ENCODE measurements at regions of chr7 and their contacts with region 1.

Region 1: DNA sequence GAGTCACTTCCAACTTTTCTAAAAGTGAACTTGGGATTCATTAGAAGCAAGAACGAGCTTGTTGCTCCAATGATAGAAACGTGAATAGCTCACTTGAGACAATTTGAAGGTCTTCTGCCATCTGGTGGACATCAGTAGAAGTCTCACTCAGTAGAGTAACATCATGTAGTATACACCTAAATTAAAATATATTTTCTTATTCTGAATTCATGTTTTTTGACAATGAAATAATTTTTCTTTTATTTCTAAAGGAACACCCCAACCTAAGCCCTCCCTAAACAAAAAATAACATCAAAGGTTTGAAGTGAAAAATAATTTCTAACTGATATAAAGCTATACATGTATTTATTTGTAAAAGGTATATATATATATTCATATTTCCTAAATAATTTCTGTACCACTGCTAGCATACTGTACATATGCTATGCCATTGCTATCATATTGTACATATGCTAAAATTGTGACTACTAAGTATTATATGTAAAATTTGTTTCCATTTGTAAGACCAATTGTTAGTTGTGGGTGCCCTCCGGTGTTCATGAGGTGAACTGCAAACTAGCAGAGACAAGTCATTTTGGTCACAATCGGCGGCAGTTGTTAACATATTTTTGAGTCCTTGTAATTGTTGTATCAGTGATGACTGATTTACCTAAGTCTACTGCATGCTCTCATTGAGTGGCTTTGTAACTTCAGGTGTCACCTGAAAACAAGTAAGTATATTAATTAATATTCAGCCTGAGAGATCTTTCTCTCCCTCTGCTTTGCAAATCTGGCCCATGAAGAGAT is 121.9 kb downstream of the PTPRZ1 start:
- DNase-seq: peak; percentile 59
- CTCF ChIP-seq: peak; percentile 77

Region 2: DNA sequence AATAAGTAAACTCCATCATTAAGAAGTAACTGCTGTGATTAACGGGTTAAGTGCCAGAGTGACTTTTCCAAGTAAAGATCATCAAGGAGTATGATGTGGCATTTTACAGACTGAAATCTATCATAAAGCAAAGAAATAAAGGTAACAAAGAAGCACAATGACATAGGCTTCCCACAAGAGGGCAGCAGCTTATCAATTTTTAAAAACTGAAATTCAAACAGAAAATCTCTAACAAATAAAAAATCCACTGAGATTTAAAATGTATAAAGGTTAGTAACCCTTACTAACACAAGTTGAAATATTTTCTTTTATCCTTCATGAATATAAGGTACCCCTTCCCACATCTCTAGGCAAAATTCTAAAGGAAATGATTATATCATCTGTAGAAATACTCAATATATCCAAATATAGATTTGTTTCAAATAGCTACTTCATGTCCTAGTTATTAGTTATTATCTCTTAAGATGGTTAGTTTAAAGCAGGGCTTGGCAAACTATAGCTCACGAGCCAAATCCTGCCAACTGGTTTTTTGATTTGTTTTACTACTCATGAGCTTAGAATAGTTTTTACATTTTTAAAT is 627.9 kb before region 1 on chr7:
- in situ Hi-C with region 1: loop called (anchors 25 kb)
- DNase-seq: peak; percentile 25
- CTCF ChIP-seq: peak; percentile 62

Region 3: GRCh38 chr7:121752706-121753105 is 242.1 kb before region 1 on chr7:
- in situ Hi-C with region 1: loop called (anchors 25 kb)
- DNase-seq: no peak
- CTCF ChIP-seq: peak; percentile 32

Region 4: GRCh38 chr7:122056977-122057376 is 62.2 kb after region 1 on chr7:
- in situ Hi-C with region 1: no loop called
- DNase-seq: no peak
- CTCF ChIP-seq: no peak